ENCODE measurements at regions of chr17 and their contacts with region 1.

Region 1: GRCh38 chr17:77404812-77405581 is 264.2 kb downstream of the SEC14L1 start:
- DNase-seq: peak; percentile 67 to 91
- H3K4me3 ChIP-seq: peak overlapping the region in 1 of 2 donors; percentile 7
- H3K27ac ChIP-seq: peak overlapping the region; percentile 88 to 91
- H3K4me1 ChIP-seq: peaks cover 45 to 66% of the 10 kb centered on the region in 2 donors
- H3K27me3 ChIP-seq: no peaks in the 10 kb centered on the region
- CTCF ChIP-seq: no peak

Region 2: DNA sequence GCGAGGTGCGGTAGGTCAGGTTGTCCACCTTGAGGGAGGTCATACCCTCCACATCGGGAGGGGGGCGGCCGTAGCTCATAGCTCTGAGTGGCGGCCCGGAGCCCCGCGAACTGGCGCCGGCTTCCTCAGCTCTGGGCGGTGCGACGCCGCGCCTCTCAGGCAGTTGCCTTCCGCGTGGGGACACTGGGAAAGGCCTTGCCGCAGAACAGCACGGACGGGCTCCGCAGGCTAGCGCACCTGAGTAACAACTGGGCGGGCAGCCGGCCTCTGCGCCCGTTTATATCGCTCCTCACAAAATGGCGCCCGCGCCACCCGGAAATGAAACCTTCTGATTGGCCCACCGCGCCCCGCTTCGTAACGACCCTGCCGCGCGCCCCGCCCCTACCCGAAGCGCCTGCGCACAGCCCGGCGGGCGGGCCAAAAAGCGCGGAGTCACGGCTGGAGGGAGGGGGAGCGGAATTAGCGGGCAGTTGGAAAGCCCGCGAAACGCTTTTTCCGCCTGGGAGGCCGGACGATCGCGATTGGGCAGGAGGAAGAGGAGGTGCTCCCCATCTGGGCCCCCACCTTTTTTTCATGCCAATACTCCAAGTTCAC is 667.8 kb before region 1 on chr17 and contains the start of gene SRSF2:
- intact Hi-C with region 1: loop called (anchors 10 kb)
- DNase-seq: peak; percentile 89 to 99
- H3K4me3 ChIP-seq: peak within 1 kb of the TSS; percentile 92 to 97
- H3K27ac ChIP-seq: peak within 1 kb of the TSS; percentile 95 to 98
- H3K4me1 ChIP-seq: peaks cover 5 to 47% of the 10 kb centered on the region in 2 donors
- H3K27me3 ChIP-seq: no peaks in the 10 kb centered on the region
- CTCF ChIP-seq: no peak
- total RNA-seq, gene SRSF2: 429 TPM

Region 3: DNA sequence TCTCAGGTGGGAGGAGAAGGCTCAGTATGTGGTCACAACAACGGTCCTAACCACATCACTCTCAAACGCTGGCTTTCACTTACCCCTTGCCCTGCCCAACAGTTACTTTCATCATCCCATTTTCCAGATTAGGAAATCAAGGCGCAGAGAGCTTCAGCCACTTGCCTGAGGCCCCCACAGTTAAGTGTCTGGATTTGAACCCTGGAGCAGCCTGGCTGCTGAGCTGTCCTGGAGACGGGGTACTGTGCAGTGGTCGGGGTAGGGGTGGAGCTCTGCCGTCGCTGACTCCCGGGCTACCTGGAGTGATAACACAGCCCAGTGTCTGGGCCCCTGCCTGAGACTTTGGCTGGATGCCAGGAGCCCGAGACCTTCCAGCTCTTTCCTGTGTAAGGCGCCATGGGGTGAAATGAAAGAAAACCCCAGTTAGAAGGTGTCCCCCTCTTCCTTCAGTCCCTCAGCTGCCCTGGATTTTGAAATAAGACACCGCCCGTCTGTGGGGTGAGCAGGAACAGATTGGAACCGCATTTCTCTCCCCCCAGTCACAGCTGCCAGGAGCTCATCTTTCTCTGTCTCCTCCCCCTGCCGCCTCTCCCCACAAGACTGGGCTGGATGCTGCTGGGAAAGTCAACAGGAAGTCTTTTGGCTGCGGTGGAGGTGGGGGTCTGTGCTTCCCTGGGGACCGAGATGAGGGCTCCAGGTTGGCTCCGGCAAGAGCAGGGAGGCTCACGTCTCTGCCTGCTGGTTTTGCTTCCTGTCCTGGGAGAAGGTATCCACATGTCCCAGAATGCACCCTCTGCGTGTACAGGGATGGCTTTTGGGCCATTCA is 16.0 kb after region 1 on chr17:
- intact Hi-C with region 1: loop called (anchors 1 kb)
- DNase-seq: no peak
- H3K4me3 ChIP-seq: no peak overlapping the region
- H3K27ac ChIP-seq: peak overlapping the region in 1 of 2 donors; percentile 41
- H3K4me1 ChIP-seq: peaks cover 16 to 46% of the 10 kb centered on the region in 2 donors
- H3K27me3 ChIP-seq: no peaks in the 10 kb centered on the region
- CTCF ChIP-seq: no peak

Region 4: DNA sequence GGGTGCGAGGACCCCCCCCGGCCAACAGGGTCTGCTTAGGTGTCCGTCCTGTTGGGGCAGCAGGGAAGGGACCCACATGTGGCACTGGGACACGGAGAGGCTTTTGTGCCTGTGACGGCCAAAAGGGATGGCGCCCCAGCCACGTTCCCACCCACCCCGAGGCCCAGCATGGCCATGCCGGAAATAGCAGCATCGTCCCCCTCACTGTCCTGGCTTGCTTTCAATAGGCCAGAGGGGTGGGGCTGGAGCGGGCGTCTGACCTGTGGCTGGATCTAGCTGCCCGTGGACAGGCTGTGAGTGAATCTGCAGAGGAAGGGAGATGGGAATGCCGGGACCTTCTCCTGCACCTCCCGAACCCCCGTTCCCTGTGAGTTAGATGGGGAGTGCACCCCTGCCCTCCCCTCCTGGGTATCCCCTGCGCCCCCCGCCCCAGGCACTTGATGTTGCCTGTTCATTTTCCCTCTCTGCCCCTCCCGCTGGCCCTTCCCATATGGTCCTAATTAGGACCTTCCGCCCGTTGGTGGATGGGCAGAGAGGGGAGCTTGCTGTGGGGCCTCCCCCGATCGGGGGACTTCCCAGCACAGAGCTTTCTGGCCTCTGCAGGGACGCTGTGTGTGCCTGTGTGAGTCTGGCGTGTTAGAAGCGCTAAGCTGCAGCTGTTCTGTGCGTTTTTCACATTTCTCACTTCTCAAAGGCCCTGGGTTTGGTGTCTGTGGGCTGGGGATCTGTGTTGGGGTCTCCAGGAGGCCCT is 28.6 kb after region 1 on chr17:
- intact Hi-C with region 1: no loop called
- DNase-seq: no peak
- H3K4me3 ChIP-seq: no peak overlapping the region
- H3K27ac ChIP-seq: no peak overlapping the region
- H3K4me1 ChIP-seq: peaks cover 27 to 50% of the 10 kb centered on the region in 2 donors
- H3K27me3 ChIP-seq: no peaks in the 10 kb centered on the region
- CTCF ChIP-seq: no peak

Region 5: DNA sequence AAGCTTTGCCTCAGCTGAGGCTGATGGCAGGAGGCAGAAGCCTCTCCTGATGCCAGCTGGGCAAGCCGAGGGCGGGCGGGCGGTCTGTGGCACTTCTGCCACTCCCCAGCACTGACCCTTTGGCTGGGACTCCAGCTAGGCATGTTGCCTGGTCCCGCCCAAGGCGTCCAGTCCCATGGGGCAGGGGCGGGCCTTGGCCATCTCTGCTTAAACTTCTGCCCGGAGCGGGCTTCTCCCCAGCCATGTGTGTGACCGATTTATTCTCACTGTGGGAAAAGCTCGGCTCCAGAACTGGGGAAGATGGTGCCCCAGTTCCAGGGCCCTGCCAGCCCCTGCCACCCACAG is 84.9 kb after region 1 on chr17:
- intact Hi-C with region 1: no loop called
- DNase-seq: peak; percentile 69 to 94
- H3K4me3 ChIP-seq: no peak overlapping the region
- H3K27ac ChIP-seq: peak overlapping the region; percentile 54 to 55
- H3K4me1 ChIP-seq: peaks cover 10 to 16% of the 10 kb centered on the region in 2 donors
- H3K27me3 ChIP-seq: no peaks in the 10 kb centered on the region
- CTCF ChIP-seq: no peak

Measured in ascending aorta (tissue), 2 donors.